Panc1 (cell line): ENCODE measurements at regions of chr14 and their contacts with region 1.

Region 1: DNA sequence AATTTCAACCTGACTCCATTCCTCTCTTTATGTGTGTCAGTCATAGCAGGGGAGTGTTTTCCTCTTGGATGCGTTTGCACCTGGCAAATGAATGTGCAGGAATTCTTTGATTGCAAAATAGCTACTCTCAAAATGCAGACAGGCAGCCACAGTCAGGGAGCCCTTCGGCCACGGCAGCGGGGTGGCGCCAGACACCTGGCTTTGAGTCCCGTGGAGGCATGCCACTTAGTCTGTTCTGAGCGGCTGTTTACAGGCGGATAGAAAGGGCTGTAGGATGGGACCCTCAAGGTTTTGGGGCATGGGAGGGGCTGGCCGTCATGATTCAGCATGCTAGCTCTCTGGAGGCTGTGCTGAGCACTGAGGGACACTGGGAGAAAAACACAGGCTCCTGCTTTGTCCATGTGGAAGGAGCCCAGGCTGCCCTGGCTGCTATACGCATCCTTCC is 117.1 kb downstream of the SLC25A47 start:
- DNase-seq: peak; percentile 45
- ATAC-seq: peak; percentile 82
- H3K4me3 ChIP-seq: no peak overlapping the region
- H3K27ac ChIP-seq: peak overlapping the region; percentile 94
- H3K4me1 ChIP-seq: peaks cover 76% of the 10 kb centered on the region
- H3K27me3 ChIP-seq: no peaks in the 10 kb centered on the region
- CTCF ChIP-seq: peak; percentile 86

Region 2: DNA sequence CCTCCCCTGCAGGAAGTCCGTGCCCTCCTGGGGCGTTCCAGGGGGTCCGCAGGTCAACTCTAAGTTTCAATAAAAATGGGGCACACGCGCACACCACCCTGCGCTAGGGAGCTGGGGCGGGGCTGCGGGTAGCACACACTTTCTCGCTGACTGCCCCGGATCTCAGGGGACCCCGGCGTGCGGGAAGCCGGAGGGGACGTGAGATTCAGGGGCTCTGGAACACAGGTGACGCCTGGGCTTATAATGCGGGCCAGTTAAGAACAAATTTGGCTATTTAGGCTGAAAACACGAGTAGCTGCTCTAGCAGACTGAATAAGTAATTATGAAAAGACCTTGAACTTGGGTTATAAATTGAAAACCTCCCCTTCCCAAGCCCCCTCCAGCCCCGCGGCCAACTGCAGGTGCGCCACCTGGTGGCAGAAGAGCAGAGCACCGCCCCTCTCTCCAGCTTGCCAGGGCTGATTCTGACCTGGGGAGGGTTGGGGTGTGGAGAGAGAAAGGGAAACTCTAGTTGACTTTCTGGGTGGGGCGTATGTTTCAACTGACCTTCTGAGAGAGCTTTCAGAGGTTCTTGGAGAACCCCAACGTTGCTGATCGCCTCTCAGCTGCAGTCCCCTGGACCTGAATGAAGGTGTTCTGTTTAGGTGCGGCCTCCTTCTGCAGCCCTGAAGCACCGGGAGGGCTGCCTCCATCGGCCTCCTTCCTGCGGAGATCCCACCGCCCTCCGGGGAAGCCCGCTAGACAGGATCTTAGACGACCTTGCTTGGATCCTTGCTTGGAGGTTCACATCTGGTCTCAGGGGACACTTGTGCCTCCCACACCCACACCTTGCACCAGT is 493.3 kb before region 1 on chr14:
- CTCF ChIA-PET with region 1: no interaction called
- POLR2A ChIA-PET with region 1: no interaction called
- in situ Hi-C with region 1: no loop called
- intact Hi-C with region 1: no loop called
- DNase-seq: no peak
- ATAC-seq: peak; percentile 86
- H3K4me3 ChIP-seq: no peak overlapping the region
- H3K27ac ChIP-seq: no peak overlapping the region
- H3K4me1 ChIP-seq: no peaks in the 10 kb centered on the region
- H3K27me3 ChIP-seq: no peaks in the 10 kb centered on the region
- CTCF ChIP-seq: peak; percentile 94

Region 3: GRCh38 chr14:100383727-100384158 is 56.5 kb before region 1 on chr14:
- CTCF ChIA-PET with region 1: interaction called, 10 read pairs
- POLR2A ChIA-PET with region 1: interaction called, 6 read pairs
- in situ Hi-C with region 1: no loop called
- intact Hi-C with region 1: no loop called
- DNase-seq: no peak
- ATAC-seq: peak; percentile 82
- H3K4me3 ChIP-seq: no peak overlapping the region
- H3K27ac ChIP-seq: peak overlapping the region; percentile 93; the same call in 1 of the 2 replicates
- H3K4me1 ChIP-seq: peaks cover 42% of the 10 kb centered on the region
- H3K27me3 ChIP-seq: no peaks in the 10 kb centered on the region
- CTCF ChIP-seq: peak; percentile 91

Region 4: DNA sequence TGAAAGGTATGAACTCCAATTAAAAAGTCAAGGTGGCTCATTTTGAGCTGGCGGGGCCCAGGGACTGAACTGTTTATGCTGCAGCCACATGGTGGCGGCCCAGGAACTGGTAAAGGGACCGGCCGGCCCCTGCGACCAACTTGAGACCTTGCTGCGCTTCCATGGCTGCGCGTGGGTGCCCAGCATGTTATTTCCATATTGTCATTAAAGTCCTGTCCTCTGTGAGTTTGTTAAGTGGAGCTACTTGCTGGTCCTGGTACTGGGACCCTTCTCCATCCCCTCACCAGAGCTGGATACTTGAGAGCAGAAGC is 84.7 kb after region 1 on chr14:
- CTCF ChIA-PET with region 1: no interaction called
- POLR2A ChIA-PET with region 1: no interaction called
- in situ Hi-C with region 1: no loop called
- intact Hi-C with region 1: loop called (anchors 10 kb)
- DNase-seq: no peak
- ATAC-seq: no peak
- H3K4me3 ChIP-seq: no peak overlapping the region
- H3K27ac ChIP-seq: peak overlapping the region; percentile 48; the same call in 1 of the 2 replicates
- H3K4me1 ChIP-seq: no peaks in the 10 kb centered on the region; the same call in 1 of the 2 replicates
- H3K27me3 ChIP-seq: no peaks in the 10 kb centered on the region
- CTCF ChIP-seq: no peak; the same call in 1 of the 2 replicates

Region 5: GRCh38 chr14:100645192-100645990 is 205.2 kb after region 1 on chr14:
- CTCF ChIA-PET with region 1: interaction called, 9 read pairs
- POLR2A ChIA-PET with region 1: no interaction called
- in situ Hi-C with region 1: no loop called
- intact Hi-C with region 1: loop called (anchors 5 kb)
- DNase-seq: no peak
- ATAC-seq: peak; percentile 86
- H3K4me3 ChIP-seq: no peak overlapping the region
- H3K27ac ChIP-seq: peak overlapping the region; percentile 71
- H3K4me1 ChIP-seq: peaks cover 15% of the 10 kb centered on the region
- H3K27me3 ChIP-seq: no peaks in the 10 kb centered on the region
- CTCF ChIP-seq: peak; percentile 81